ENCODE measurements at regions of chr11 and their contacts with region 1.

Region 1: DNA sequence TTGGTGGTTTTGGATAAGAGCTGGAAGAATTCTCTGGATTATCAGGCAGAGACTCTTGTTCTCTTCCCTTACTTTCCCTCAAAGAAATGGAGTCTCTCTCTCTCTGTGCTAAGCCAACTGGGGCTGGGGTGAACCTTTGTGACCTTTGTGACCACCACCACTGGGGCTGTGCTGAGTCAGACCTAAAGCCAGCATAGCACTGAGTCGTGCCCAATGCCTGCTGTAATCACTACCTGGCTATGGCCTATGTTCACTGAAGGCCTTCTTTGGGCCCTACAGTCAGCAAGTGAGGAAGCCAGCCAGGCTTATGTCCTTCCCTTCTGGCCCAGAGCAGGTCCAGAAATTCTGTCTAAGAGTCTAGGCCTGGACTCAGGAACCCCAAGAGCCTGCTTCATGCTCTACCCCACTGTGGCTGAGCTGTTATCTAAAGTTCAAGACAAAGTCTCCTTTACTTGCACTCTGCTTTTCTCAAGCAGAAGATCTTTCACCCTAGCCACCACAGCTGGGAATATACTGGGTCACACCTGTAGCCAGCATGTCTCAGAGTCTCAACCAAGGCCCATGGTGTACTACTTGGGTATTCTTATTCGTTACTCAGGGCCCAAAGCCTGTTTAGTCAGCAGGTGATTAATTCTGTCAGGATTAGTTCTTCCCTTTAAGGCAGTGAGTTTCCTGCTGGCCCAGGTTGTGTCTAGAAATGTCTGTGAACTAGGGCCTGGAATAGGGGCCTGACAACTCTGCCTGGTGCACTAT is 86.0 kb downstream of the EHF start:
- DNase-seq: no peak
- H3K4me3 ChIP-seq: no peak overlapping the region
- CTCF ChIP-seq: no peak

Region 2: DNA sequence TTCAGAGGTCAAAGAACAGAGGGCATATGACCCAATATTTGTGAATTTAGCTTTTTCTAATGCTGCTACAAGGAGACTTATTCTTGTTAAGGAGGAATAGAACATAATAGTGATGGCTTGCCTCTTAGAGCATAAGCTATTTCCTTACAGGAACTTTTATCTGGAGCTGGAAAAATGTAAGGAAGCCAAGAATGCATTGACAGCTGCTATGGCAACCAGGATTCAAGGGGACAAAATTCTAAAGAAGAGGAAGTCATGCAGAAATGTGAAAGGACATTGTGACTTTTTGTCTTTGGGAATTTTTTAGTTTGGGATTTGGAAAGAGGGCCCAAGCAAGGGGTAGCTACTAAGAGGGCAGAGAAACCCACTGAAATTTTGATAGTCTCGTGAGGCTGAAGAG is 34.9 kb before region 1 on chr11:
- in situ Hi-C with region 1: loop called (anchors 5 kb)
- DNase-seq: no peak
- H3K4me3 ChIP-seq: no peak overlapping the region
- CTCF ChIP-seq: no peak

Region 3: GRCh38 chr11:34783816-34784317 is 77.0 kb after region 1 on chr11:
- in situ Hi-C with region 1: no loop called
- DNase-seq: no peak
- H3K4me3 ChIP-seq: no peak overlapping the region
- CTCF ChIP-seq: no peak